A549 (cell line): ENCODE measurements at regions of chr20 and their contacts with region 1.

Region 1: DNA sequence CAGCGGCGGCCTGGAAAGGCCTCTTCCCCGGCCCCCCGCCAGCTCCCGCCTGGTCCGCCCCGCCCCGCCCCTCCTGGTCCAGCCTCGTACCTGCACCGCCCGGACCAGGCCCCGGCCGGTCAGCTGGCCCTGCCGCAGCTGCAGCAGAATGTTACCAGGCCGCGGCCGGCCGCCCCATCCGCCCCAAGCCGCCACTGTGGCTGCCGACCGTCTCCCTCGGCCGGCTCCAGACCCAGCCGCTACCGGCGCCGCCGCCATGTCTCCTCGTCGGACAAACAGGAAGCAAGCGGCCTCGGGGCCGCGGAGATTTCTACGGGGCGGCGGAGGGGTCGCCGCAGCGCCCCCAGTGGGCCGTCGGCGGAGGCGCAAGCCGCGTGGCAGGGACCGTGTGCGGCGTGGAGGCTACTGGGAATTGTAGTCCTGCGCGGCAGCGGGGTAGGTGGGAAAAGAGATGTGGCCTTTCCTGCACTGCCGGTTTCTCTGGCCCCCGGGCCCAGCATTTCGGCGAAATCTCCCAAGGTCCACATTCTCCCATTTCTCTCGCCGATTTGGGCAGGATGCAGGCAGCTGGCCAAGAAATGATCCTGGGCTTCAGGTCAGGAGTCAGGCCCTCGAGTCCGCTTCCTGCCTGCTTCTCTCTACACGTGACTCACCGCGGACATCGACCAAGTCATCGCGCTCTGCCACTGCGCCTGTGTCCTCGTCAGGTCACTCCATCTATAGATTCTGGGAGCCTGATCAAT is at the start of gene TRPC4AP:
- DNase-seq: peak; percentile 69 to 91
- ATAC-seq: peak; percentile 94 to 95
- H3K4me3 ChIP-seq: peak within 1 kb of the TSS; percentile 61
- H3K27ac ChIP-seq: peak within 1 kb of the TSS; percentile 93 to 94
- H3K4me1 ChIP-seq: peaks cover 27% of the 10 kb centered on the region
- CTCF ChIP-seq: peak; percentile 89
- EP300 ChIP-seq: no peak
- POLR2A ChIP-seq: peak; percentile 61
- RAD21 ChIP-seq: peak; percentile 47 to 52
- polyA plus RNA-seq, gene TRPC4AP: 55.3 and 64.6 TPM in 2 replicates

Region 2: GRCh38 chr20:34452281-34452982 is 640.3 kb before region 1 on chr20:
- CTCF ChIA-PET with region 1: no interaction called
- POLR2A ChIA-PET with region 1: no interaction called
- DNase-seq: no peak
- ATAC-seq: no peak
- H3K4me3 ChIP-seq: no peak overlapping the region
- H3K27ac ChIP-seq: no peak overlapping the region
- H3K4me1 ChIP-seq: no peaks in the 10 kb centered on the region
- CTCF ChIP-seq: no peak
- EP300 ChIP-seq: no peak
- POLR2A ChIP-seq: no peak
- RAD21 ChIP-seq: no peak

Region 3: GRCh38 chr20:35111141-35111888 is 18.6 kb after region 1 on chr20:
- CTCF ChIA-PET with region 1: interaction called, 41 read pairs
- POLR2A ChIA-PET with region 1: interaction called, 4 read pairs
- DNase-seq: no peak
- ATAC-seq: no peak
- H3K4me3 ChIP-seq: no peak overlapping the region
- H3K27ac ChIP-seq: peak overlapping the region in 1 of 2 experiments; percentile 47; a peak in 3 of 6 replicates
- H3K4me1 ChIP-seq: peaks cover 5% of the 10 kb centered on the region; the same call in 1 of the 3 replicates
- CTCF ChIP-seq: no peak
- EP300 ChIP-seq: no peak
- POLR2A ChIP-seq: no peak
- RAD21 ChIP-seq: no peak

Region 4: GRCh38 chr20:35121186-35121585 is 28.5 kb after region 1 on chr20:
- CTCF ChIA-PET with region 1: interaction called, 20 read pairs
- POLR2A ChIA-PET with region 1: interaction called, 3 read pairs
- DNase-seq: no peak
- ATAC-seq: no peak
- H3K4me3 ChIP-seq: no peak overlapping the region
- H3K27ac ChIP-seq: no peak overlapping the region
- H3K4me1 ChIP-seq: no peaks in the 10 kb centered on the region
- CTCF ChIP-seq: no peak
- EP300 ChIP-seq: no peak
- POLR2A ChIP-seq: no peak
- RAD21 ChIP-seq: no peak

Region 5: DNA sequence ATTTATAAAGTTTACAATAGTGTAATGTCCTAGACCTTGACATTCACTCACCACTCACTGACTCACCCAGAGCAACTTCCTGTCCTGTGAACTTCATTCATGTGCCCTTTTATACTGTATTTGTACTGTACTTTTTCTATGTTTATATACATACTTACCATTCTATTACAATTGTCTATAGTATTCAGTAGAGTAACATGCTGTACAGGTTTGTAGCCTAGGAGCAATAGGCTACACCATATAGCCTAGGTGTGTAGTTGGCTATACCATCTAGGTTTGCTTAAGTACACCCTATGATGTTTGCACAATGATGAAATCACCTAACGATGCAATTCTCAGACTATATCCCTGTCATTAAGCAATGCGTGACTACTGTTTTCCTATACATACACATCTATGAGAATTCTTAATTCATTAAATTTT is 37.0 kb after region 1 on chr20:
- CTCF ChIA-PET with region 1: interaction called, 14 read pairs
- POLR2A ChIA-PET with region 1: no interaction called
- DNase-seq: peak in 1 of 2 experiments; percentile 56
- ATAC-seq: peak in 1 of 2 experiments; percentile 78; a peak in 3 of 6 replicates
- H3K4me3 ChIP-seq: no peak overlapping the region
- H3K27ac ChIP-seq: peak overlapping the region; percentile 52 to 70
- H3K4me1 ChIP-seq: peaks cover 28% of the 10 kb centered on the region
- CTCF ChIP-seq: no peak
- EP300 ChIP-seq: no peak
- POLR2A ChIP-seq: no peak
- RAD21 ChIP-seq: no peak

Region 6: GRCh38 chr20:35146920-35147574 is 54.4 kb after region 1 on chr20 and contains the start of gene EDEM2:
- CTCF ChIA-PET with region 1: interaction called, 17 read pairs
- POLR2A ChIA-PET with region 1: no interaction called
- DNase-seq: peak; percentile 95 to 97
- ATAC-seq: peak; percentile 95 to 96
- H3K4me3 ChIP-seq: peak within 1 kb of the TSS; percentile 78
- H3K27ac ChIP-seq: peak within 1 kb of the TSS; percentile 89
- H3K4me1 ChIP-seq: peaks cover 17% of the 10 kb centered on the region
- CTCF ChIP-seq: peak; percentile 7; the same call in 1 of the 3 replicates
- EP300 ChIP-seq: no peak
- POLR2A ChIP-seq: peak; percentile 81
- RAD21 ChIP-seq: peak in 1 of 2 experiments; percentile 35; a peak in 2 of 5 replicates
- polyA plus RNA-seq, gene EDEM2: 41.2 and 41.6 TPM in 2 replicates

Region 7: GRCh38 chr20:35215066-35215956 is 122.6 kb after region 1 on chr20:
- CTCF ChIA-PET with region 1: interaction called, 59 read pairs
- POLR2A ChIA-PET with region 1: no interaction called
- DNase-seq: peak; percentile 74 to 88
- ATAC-seq: peak; percentile 88 to 93
- H3K4me3 ChIP-seq: no peak overlapping the region
- H3K27ac ChIP-seq: peak overlapping the region; percentile 76 to 91
- H3K4me1 ChIP-seq: peaks cover 63% of the 10 kb centered on the region
- CTCF ChIP-seq: no peak
- EP300 ChIP-seq: peak; percentile 54 to 92; a peak in 3 of 5 replicates
- POLR2A ChIP-seq: no peak
- RAD21 ChIP-seq: peak; percentile 22 to 28; a peak in 1 of 5 replicates

Region 8: GRCh38 chr20:35277531-35278395 is 185.1 kb after region 1 on chr20 and contains the start of gene MMP24OS:
- CTCF ChIA-PET with region 1: interaction called, 194 read pairs
- POLR2A ChIA-PET with region 1: no interaction called
- DNase-seq: peak; percentile 84 to 89
- ATAC-seq: peak; percentile 73 to 85
- H3K4me3 ChIP-seq: peak within 1 kb of the TSS; percentile 76
- H3K27ac ChIP-seq: peak within 1 kb of the TSS; percentile 98 to 99
- H3K4me1 ChIP-seq: peaks cover 31% of the 10 kb centered on the region
- CTCF ChIP-seq: no peak; the same call in 2 of the 3 replicates
- EP300 ChIP-seq: no peak
- POLR2A ChIP-seq: peak; percentile 90
- RAD21 ChIP-seq: peak in 1 of 2 experiments; percentile 21; a peak in 3 of 5 replicates
- polyA plus RNA-seq, gene MMP24OS: 13.6 and 17.2 TPM in 2 replicates